ENCODE measurements at regions of chr22 and their contacts with region 1.

Region 1: GRCh38 chr22:31084811-31085497 is 3.8 kb downstream of the SMTN start:
- DNase-seq: no peak
- ATAC-seq: no peak
- H3K4me3 ChIP-seq: peak overlapping the region; percentile 73; the same call in 1 of the 2 replicates
- H3K27ac ChIP-seq: no peak overlapping the region
- H3K4me1 ChIP-seq: peaks cover 33% of the 10 kb centered on the region
- H3K27me3 ChIP-seq: no peaks in the 10 kb centered on the region
- CTCF ChIP-seq: peak; percentile 55

Region 2: DNA sequence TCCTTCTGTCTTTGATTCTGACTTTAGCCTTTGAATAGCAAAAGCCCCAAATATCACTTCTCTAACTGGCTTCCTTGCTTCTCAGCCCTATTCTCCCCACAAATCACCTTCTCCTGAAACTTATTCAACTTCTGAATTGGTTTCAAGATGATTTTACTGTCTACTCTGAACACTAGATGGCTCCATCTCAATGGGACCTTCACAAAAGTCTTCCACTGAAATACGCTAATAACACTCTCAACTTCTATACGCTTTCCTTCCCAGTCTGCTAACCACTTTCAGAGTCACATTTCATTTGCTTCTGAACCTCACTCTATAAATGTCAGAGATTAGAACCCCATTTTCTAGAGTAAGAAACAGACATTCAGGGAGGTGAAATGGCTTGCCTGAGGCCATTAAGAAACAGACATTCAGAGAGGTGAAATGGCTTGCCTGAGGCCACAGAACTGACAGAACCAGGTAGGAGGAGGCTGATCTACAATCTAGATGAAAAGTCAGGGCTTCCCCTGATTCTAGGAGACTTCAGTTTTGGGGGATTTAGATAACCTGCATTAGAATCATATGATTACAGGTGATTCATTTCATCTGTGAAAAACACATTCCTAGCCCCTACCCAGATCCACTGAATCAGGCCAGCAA is 137.0 kb before region 1 on chr22:
- CTCF ChIA-PET with region 1: interaction called, 5 read pairs
- POLR2A ChIA-PET with region 1: no interaction called
- intact Hi-C with region 1: loop called (anchors 2 kb)
- DNase-seq: peak; percentile 47
- ATAC-seq: no peak
- H3K4me3 ChIP-seq: no peak overlapping the region
- H3K27ac ChIP-seq: no peak overlapping the region
- H3K4me1 ChIP-seq: no peaks in the 10 kb centered on the region
- H3K27me3 ChIP-seq: no peaks in the 10 kb centered on the region
- CTCF ChIP-seq: peak; percentile 69

Region 3: DNA sequence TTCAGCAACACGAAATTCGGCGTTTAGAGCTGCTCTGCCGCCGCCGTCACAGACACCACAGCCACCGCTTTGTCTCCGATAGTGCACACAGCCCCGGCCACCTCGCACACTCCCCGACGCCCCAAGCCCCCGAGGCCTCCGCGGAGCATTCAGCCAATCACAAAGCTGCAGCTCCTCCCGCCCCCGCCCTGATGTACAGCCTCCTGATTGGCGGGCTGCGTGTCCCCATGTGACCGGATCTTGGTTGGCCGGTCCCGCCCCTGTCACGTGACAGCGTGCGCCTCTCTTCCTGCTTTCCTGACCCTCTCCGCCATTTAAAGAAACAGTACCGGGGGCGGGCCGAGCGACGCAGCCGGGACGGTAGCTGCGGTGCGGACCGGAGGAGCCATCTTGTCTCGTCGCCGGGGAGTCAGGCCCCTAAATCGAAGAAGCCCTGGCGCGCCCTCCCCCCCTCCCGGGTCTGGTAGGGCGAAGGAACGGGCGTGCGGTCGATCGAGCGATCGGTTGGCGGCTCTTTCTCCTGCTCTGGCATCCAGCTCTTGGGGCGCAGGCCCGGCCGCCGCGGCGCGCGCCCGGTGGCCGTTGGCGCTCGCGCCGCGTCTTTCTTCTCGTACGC is 115.9 kb before region 1 on chr22 and contains the start of gene TUG1:
- CTCF ChIA-PET with region 1: interaction called, 9 read pairs
- POLR2A ChIA-PET with region 1: interaction called, 8 read pairs
- intact Hi-C with region 1: loop called (anchors 2 kb)
- DNase-seq: peak; percentile 91
- ATAC-seq: peak; percentile 91
- H3K4me3 ChIP-seq: peak within 1 kb of the TSS; percentile 94
- H3K27ac ChIP-seq: peak within 1 kb of the TSS; percentile 63
- H3K4me1 ChIP-seq: peaks cover 34% of the 10 kb centered on the region
- H3K27me3 ChIP-seq: no peaks in the 10 kb centered on the region
- CTCF ChIP-seq: no peak
- total RNA-seq, gene TUG1: 35.1 and 44.1 TPM in 2 replicates